ENCODE measurements at regions of chr7 and their contacts with region 1.

Region 1: GRCh38 chr7:103751311-103751880 is 238.1 kb downstream of the RELN start:
- DNase-seq: no peak
- H3K4me3 ChIP-seq: no peak overlapping the region
- H3K27ac ChIP-seq: no peak overlapping the region
- H3K4me1 ChIP-seq: no peaks in the 10 kb centered on the region
- H3K27me3 ChIP-seq: no peaks in the 10 kb centered on the region
- CTCF ChIP-seq: no peak
- EP300 ChIP-seq: no peak
- POLR2A ChIP-seq: no peak

Region 2: GRCh38 chr7:103805346-103805745 is 54.0 kb after region 1 on chr7:
- in situ Hi-C with region 1: no loop called
- intact Hi-C with region 1: loop called (anchors 2 kb)
- DNase-seq: no peak
- H3K4me3 ChIP-seq: no peak overlapping the region
- H3K27ac ChIP-seq: no peak overlapping the region
- H3K4me1 ChIP-seq: no peaks in the 10 kb centered on the region
- H3K27me3 ChIP-seq: no peaks in the 10 kb centered on the region
- CTCF ChIP-seq: no peak
- EP300 ChIP-seq: no peak
- POLR2A ChIP-seq: no peak